ENCODE measurements at regions of chr2 and their contacts with region 1.

Region 1: GRCh38 chr2:218852911-218853667 is 6.5 kb upstream of the WNT6 start:
- DNase-seq: peak; percentile 74
- ATAC-seq: peak; percentile 52
- H3K4me3 Mint-ChIP-seq: no peak overlapping the region
- H3K27ac Mint-ChIP-seq: no peak overlapping the region
- H3K4me1 Mint-ChIP-seq: no peaks in the 10 kb centered on the region
- H3K27me3 Mint-ChIP-seq: peaks cover 52% of the 10 kb centered on the region

Region 2: GRCh38 chr2:218671654-218672566 is 181.2 kb before region 1 on chr2 and contains the starts of genes RNF25 and STK36:
- CTCF ChIA-PET with region 1: interaction called, 15 read pairs
- POLR2A ChIA-PET with region 1: interaction called, 3 read pairs
- DNase-seq: peak; percentile 89
- ATAC-seq: peak; percentile 92
- H3K4me3 Mint-ChIP-seq: peak within 1 kb of the TSS; percentile 88
- H3K27ac Mint-ChIP-seq: peak within 1 kb of the TSS; percentile 93
- H3K4me1 Mint-ChIP-seq: peaks cover 26% of the 10 kb centered on the region
- H3K27me3 Mint-ChIP-seq: no peaks in the 10 kb centered on the region
- total RNA-seq, gene RNF25: 19.0 to 25.8 TPM
- total RNA-seq, gene STK36: 12.1 to 15.2 TPM

Region 3: DNA sequence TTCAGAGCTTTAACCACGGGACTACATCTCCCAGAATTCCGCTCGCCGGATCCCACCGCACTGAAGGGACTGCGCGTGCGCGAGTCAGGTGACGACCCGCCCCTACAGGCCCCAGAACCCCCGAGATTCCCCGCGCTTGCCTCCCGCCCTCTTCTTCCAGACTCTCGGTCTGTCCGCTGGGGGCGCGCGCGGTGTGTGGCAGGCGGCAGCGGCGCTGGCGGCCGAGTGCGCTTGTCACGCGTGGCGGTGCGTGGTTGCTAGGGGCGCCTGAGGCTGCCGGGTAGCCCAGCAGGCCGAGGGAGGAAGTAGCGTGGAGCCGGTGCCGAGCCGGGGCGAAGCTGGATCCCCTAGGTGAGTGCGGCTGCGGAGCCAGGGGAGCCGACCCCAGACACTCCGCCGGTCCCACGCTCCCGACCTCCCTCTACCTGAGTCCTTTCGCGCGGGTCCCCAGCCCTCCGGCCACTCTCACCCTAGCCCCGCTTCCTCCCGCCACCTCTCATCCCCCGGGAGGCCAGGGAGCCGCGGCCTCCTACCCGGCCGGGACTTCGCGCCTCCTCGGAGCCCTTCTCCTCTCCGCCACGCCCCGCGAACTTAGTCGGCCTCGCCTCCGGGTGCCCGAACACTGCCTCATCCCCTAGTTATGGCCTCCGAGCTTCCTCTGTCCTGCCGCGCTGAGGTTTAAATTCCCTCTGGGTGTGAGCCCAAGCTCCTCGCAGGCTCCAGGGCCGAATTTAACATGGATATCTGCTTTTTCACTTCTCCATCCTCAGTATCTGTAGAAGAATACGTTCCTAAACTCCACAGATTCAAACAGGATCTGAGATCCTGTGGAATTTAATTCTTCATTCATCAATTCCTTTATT is 142.2 kb before region 1 on chr2 and contains the start of gene TTLL4:
- CTCF ChIA-PET with region 1: interaction called, 15 read pairs
- POLR2A ChIA-PET with region 1: no interaction called
- DNase-seq: peak; percentile 99
- ATAC-seq: peak; percentile 99
- H3K4me3 Mint-ChIP-seq: peak within 1 kb of the TSS; percentile 96
- H3K27ac Mint-ChIP-seq: peak within 1 kb of the TSS; percentile 76
- H3K4me1 Mint-ChIP-seq: peaks cover 38% of the 10 kb centered on the region
- H3K27me3 Mint-ChIP-seq: peaks cover 2% of the 10 kb centered on the region
- total RNA-seq, gene TTLL4: 25.8 to 27.7 TPM

Region 4: GRCh38 chr2:218732761-218733158 is 120.3 kb before region 1 on chr2:
- CTCF ChIA-PET with region 1: interaction called, 34 read pairs
- POLR2A ChIA-PET with region 1: no interaction called
- DNase-seq: no peak
- ATAC-seq: no peak
- H3K4me3 Mint-ChIP-seq: no peak overlapping the region
- H3K27ac Mint-ChIP-seq: no peak overlapping the region
- H3K4me1 Mint-ChIP-seq: peaks cover 15% of the 10 kb centered on the region
- H3K27me3 Mint-ChIP-seq: no peaks in the 10 kb centered on the region

Region 5: GRCh38 chr2:218811382-218811781 is 41.7 kb before region 1 on chr2:
- CTCF ChIA-PET with region 1: no interaction called
- POLR2A ChIA-PET with region 1: no interaction called
- DNase-seq: no peak
- ATAC-seq: no peak
- H3K4me3 Mint-ChIP-seq: no peak overlapping the region
- H3K27ac Mint-ChIP-seq: no peak overlapping the region
- H3K4me1 Mint-ChIP-seq: peaks cover 1% of the 10 kb centered on the region
- H3K27me3 Mint-ChIP-seq: peaks cover 18% of the 10 kb centered on the region

Region 6: DNA sequence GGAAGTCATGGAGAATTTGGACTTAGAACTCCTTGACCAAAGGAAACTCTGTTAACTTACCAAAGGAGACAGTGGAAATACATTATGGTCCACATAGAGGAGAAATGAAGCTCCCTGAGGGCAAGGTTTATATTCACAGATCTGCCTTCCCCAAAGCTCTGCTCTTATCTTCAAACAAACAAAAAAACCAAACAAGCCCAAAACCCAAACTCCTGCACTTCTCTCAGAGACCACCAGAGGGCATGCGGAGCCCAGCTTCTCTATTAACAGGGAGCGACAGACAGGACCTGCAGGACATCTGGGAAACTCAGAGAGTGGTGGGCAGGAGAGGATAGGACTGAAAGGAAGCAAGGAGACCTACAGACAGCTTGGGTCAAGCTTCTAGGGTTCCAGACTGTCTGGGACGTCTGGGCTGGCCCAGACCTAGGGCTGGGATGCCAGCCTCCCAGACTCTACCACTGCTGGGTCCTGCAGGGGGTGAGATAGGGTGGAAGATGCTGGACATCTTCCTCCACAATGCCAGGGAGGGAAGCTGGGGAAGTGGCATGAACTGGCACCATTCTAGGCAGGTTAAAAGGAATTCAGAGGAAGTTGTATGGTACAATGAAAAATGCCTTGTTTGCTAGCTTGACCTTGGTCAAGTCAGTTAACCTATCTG is 23.6 kb after region 1 on chr2:
- CTCF ChIA-PET with region 1: interaction called, 27 read pairs
- POLR2A ChIA-PET with region 1: no interaction called
- DNase-seq: peak; percentile 76
- ATAC-seq: peak; percentile 14
- H3K4me3 Mint-ChIP-seq: no peak overlapping the region
- H3K27ac Mint-ChIP-seq: no peak overlapping the region
- H3K4me1 Mint-ChIP-seq: peaks cover 31% of the 10 kb centered on the region
- H3K27me3 Mint-ChIP-seq: peaks cover 63% of the 10 kb centered on the region